ENCODE measurements at regions of chr5 and their contacts with region 1.

Region 1: DNA sequence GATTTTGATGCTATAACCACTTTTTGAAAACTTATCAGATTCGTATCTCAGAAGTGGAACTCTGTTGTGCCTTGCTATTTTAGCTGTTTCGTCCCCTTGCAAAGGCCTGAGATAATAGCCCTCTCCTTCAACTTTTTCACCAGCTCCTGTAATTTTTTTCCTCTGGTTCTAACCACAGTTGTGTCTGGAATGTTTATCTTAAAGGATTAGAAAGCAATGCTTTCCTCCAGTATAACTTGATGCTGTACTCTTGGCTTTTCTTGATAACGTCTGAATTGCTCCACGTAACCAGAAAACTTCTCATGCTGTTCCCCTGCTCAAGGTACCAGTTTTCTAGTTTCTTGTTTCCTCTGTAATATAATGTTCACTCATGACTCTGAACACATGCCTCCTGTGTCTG is 209.4 kb downstream of the DTWD2 start:
- DNase-seq: no peak
- H3K4me3 ChIP-seq: no peak overlapping the region
- H3K4me3 Mint-ChIP-seq: no peak overlapping the region
- H3K27ac ChIP-seq: no peak overlapping the region
- H3K27ac Mint-ChIP-seq: no peak overlapping the region
- H3K4me1 ChIP-seq: no peaks in the 10 kb centered on the region
- H3K4me1 Mint-ChIP-seq: no peaks in the 10 kb centered on the region
- H3K27me3 ChIP-seq: no peaks in the 10 kb centered on the region
- H3K27me3 Mint-ChIP-seq: peaks cover 0 to 12% of the 10 kb centered on the region in 2 donors

Region 2: GRCh38 chr5:119131530-119132313 is 352.8 kb after region 1 on chr5:
- CTCF ChIA-PET with region 1: no interaction called
- POLR2A ChIA-PET with region 1: interaction called, 10 read pairs
- DNase-seq: no peak
- H3K4me3 ChIP-seq: no peak overlapping the region
- H3K4me3 Mint-ChIP-seq: no peak overlapping the region
- H3K27ac ChIP-seq: no peak overlapping the region
- H3K27ac Mint-ChIP-seq: no peak overlapping the region
- H3K4me1 ChIP-seq: no peaks in the 10 kb centered on the region
- H3K4me1 Mint-ChIP-seq: no peaks in the 10 kb centered on the region
- H3K27me3 ChIP-seq: no peaks in the 10 kb centered on the region
- H3K27me3 Mint-ChIP-seq: no peaks in the 10 kb centered on the region

Measured in CD8-positive, alpha-beta memory T cell (primary cell).